Naive thymus-derived CD4-positive, alpha-beta T cell (primary cell): ENCODE measurements at regions of chr12 and their contacts with region 1.

Region 1: DNA sequence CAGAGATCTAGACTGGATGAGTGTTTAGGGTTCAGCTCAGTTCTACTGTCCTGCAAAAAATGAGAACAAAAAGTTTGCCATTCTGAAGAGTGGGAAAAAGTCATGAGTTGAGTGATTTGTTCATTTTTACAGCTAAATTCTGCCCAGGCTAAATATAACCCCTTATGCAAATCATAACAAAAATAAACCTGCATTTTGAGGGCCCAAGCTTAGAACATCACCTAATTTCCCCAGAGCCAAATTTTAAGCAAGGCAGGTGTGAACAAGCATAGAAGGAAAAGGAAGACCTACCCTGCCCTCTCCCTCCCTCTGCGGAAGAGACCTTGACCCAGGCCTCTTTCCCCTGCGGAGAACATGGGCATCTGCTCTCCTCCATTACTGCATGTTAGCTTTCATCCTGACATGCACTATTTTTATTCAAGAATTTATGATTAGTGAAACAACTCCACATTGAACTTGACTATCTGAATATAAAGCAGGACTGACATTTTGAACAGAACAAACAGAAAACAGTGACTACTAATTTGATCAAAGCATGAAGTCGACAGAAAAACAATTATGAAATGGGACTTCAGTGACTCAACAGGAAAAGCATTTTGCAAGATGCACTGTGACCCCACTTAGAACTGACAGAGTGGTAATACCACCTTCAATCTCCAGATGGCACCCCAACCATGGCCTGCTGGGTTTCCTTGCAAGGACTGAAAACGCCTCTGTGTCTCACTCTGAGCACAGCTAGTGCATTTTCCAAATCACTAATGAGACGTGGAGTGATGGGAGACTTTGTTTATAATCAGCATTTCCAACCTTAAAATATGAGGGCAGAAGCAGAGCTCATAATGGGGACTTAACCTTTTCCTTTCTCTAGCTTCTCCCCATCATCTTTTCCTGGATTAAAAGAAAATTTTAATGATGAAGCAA is 30.9 kb upstream of the SELPLG start:
- DNase-seq: peak; percentile 35 to 83 (median 78)
- ATAC-seq: peak; percentile 97
- H3K4me3 ChIP-seq: no peak overlapping the region
- H3K4me3 Mint-ChIP-seq: peak overlapping the region in 1 of 10 donors; percentile 24
- H3K27ac ChIP-seq: no peak overlapping the region
- H3K27ac Mint-ChIP-seq: peak overlapping the region in 8 of 9 donors; percentile 8 to 84 (median 75)
- H3K4me1 ChIP-seq: peaks cover 0 to 3% of the 10 kb centered on the region in 2 donors
- H3K4me1 Mint-ChIP-seq: peaks cover 5 to 17% (median 12%) of the 10 kb centered on the region in 7 donors
- H3K27me3 ChIP-seq: no peaks in the 10 kb centered on the region
- H3K27me3 Mint-ChIP-seq: no peaks in the 10 kb centered on the region

Region 2: DNA sequence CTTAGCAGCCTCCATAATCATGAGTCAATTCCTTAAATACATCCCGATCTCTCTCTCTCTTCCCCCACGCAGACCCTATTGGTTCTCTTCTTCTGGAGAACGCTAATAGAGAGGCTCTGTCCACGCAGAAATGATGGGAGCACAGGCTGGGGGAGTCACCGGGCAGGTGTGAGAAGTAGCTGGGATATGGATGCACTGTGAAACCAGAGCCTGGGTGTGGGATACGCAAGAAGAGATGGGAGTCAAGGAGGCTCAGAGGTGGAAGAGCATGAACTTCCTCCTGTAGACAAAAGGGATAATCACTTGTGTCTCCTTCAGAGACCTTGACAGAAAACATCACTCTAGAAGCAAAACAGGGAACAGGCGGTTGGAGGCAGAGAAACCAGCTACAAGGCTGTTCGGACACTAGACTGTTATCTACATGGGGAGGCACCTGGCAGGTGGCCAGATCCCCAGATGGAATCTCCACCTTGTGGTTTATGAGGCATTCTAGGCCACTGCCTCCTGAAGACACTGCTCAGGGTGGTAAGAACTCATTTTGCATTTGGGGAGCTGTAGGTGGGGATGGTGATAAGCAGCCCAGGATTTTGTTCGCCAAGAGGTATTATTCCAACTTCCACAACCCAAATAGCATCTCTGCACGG is 23.7 kb before region 1 on chr12:
- CTCF ChIA-PET with region 1: interaction called, 38 read pairs
- POLR2A ChIA-PET with region 1: interaction called, 44 read pairs
- intact Hi-C with region 1: no loop called
- DNase-seq: no peak
- ATAC-seq: no peak
- H3K4me3 ChIP-seq: no peak overlapping the region
- H3K4me3 Mint-ChIP-seq: no peak overlapping the region
- H3K27ac ChIP-seq: no peak overlapping the region
- H3K27ac Mint-ChIP-seq: peak overlapping the region in 3 of 9 donors; percentile 33 to 78 (median 68)
- H3K4me1 ChIP-seq: peaks cover 5 to 22% of the 10 kb centered on the region in 2 donors
- H3K4me1 Mint-ChIP-seq: peaks cover 30 to 54% (median 38%) of the 10 kb centered on the region in 7 donors
- H3K27me3 ChIP-seq: no peaks in the 10 kb centered on the region
- H3K27me3 Mint-ChIP-seq: no peaks in the 10 kb centered on the region

Region 3: DNA sequence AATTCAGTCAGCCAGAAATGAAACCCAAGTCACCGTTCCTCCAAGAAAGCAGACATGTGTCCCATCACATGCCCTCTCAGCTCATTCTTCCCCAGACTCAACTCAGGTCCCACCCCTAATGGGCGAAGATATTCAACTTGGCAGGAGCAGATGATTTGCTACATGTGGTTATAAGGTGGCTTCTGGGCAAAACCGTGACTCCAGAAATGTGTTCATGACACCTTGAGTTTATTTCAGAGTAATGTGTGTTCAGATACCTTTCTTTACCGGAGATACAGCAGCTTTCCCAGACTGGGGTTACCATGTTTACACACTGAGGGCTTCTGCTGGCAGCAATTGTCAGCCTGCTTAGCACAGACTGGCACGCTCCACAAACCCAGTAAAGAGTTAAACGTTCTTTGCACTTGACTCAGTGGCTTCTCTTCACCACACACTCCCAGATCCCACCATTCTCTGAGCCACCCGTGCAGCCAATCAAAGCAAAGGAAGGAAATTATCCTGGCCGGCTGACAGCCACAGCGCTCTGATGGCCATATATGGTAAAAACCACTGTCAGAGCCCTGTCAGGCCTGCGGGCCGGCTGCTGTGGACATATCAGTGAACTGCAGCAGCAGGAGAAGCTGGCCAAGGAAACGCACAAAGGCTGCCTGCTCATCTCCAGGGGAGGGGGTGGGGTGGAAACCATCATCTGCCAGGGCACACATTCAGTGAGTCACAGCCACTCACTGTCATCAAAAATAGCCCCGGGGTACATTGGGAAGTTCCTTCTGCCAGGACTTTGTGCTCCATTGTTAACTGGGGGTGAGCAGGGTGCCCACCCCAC is 26.8 kb after region 1 on chr12:
- CTCF ChIA-PET with region 1: interaction called, 10 read pairs
- POLR2A ChIA-PET with region 1: no interaction called
- intact Hi-C with region 1: loop called (anchors 2 kb)
- DNase-seq: peak in 8 of 9 donors; percentile 5 to 57 (median 20)
- ATAC-seq: peak; percentile 87
- H3K4me3 ChIP-seq: peak overlapping the region; percentile 43
- H3K4me3 Mint-ChIP-seq: peak overlapping the region; percentile 58 to 77 (median 70)
- H3K27ac ChIP-seq: no peak overlapping the region
- H3K27ac Mint-ChIP-seq: peak overlapping the region in 7 of 9 donors; percentile 1 to 86 (median 53)
- H3K4me1 ChIP-seq: peaks cover 28 to 32% of the 10 kb centered on the region in 2 donors
- H3K4me1 Mint-ChIP-seq: peaks cover 42 to 65% (median 63%) of the 10 kb centered on the region in 7 donors
- H3K27me3 ChIP-seq: no peaks in the 10 kb centered on the region
- H3K27me3 Mint-ChIP-seq: no peaks in the 10 kb centered on the region

Region 4: DNA sequence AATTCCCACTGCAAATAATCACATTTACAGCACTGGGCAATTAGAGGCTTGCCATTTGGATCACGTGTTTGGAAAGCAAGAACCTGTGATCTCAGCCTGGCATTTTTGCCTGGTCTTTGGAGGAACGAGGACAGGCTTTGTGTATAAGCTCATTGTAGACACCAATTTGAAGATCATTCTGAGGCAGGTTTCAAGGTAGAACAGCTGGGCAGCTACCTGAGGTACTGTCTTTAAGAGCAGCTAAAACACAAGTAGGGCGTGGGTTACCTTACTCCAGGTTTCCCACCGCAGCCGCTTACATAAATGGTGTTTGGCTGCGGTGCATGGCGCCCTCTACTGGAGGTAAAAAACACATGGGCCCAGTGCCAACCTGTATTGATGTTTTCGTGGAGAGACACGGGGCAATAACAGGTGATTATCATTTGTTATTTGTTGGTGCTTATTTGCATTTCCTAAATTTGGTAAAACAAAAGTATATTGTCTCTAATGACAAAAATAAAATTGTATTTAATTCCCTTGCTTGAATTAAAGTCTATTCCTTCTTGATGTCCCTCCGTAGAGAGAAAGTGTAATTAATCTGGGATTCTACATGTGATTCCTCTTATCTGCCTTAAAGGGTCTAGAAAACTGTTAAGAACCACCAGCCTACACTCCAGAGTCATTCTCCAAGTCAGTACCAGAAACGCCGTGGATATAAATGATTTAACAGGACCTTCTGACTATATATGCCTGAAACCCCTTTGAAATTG is 286.6 kb after region 1 on chr12:
- CTCF ChIA-PET with region 1: interaction called, 7 read pairs
- POLR2A ChIA-PET with region 1: no interaction called
- intact Hi-C with region 1: loop called (anchors 1 kb)
- DNase-seq: peak; percentile 49 to 70 (median 63)
- ATAC-seq: peak; percentile 94
- H3K4me3 ChIP-seq: no peak overlapping the region
- H3K4me3 Mint-ChIP-seq: no peak overlapping the region
- H3K27ac ChIP-seq: no peak overlapping the region
- H3K27ac Mint-ChIP-seq: peak overlapping the region in 1 of 9 donors; percentile 4
- H3K4me1 ChIP-seq: no peaks in the 10 kb centered on the region
- H3K4me1 Mint-ChIP-seq: peaks cover 0 to 6% (median 4%) of the 10 kb centered on the region in 7 donors
- H3K27me3 ChIP-seq: no peaks in the 10 kb centered on the region
- H3K27me3 Mint-ChIP-seq: peaks cover 7 to 24% (median 17%) of the 10 kb centered on the region in 5 donors